ENCODE measurements at regions of chr12 and their contacts with region 1.

Region 1: DNA sequence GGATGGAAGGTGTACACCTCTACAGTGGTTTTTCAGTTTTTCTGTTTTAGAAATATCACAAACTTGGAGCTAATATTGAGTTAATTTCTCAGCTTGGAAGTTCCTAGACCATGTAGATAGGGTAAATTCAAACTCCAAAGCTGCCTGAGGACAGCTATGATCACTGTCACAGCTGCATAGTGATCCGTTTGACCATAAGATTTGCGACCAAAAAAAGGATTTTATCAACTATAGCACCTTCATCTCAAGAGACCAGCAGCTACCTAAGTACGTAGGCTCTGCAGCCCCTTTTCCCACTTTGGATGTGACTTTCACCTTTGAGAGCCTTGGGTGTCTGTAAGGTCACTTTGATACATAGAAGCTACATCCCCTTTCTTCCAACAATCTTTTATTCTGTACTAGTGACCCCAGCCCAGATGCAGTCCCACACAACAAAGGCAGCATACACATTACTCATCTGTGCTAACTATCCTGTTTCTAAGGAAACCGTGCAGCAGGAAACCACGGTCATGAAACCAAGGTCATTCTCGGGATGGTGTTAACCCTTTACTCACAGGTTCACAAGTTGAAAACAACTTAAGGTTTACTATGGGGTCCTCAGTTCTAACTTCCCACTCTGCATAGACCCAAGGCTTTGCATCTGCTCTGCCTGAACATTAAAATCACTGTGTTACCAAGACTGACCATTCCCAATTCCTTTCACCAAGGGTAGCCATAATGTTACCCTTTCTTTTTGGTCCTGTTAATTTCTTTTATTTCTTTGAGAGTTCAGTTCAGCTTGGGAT is 75.4 kb downstream of the IFT81 start:
- DNase-seq: no peak
- ATAC-seq: no peak
- H3K4me3 ChIP-seq: no peak overlapping the region
- H3K27ac ChIP-seq: no peak overlapping the region
- H3K4me1 ChIP-seq: no peaks in the 10 kb centered on the region
- H3K27me3 ChIP-seq: no peaks in the 10 kb centered on the region
- CTCF ChIP-seq: no peak

Region 2: GRCh38 chr12:110039085-110039807 is 160.3 kb before region 1 on chr12:
- CTCF ChIA-PET with region 1: no interaction called
- POLR2A ChIA-PET with region 1: no interaction called
- in situ Hi-C with region 1: no loop called
- intact Hi-C with region 1: no loop called
- DNase-seq: peak; percentile 93
- ATAC-seq: peak; percentile 96
- H3K4me3 ChIP-seq: peak overlapping the region in 1 of 2 experiments; percentile 26; a peak in 2 of 4 replicates
- H3K27ac ChIP-seq: peak overlapping the region; percentile 96
- H3K4me1 ChIP-seq: peaks cover 46% of the 10 kb centered on the region
- H3K27me3 ChIP-seq: no peaks in the 10 kb centered on the region
- CTCF ChIP-seq: no peak

Region 3: DNA sequence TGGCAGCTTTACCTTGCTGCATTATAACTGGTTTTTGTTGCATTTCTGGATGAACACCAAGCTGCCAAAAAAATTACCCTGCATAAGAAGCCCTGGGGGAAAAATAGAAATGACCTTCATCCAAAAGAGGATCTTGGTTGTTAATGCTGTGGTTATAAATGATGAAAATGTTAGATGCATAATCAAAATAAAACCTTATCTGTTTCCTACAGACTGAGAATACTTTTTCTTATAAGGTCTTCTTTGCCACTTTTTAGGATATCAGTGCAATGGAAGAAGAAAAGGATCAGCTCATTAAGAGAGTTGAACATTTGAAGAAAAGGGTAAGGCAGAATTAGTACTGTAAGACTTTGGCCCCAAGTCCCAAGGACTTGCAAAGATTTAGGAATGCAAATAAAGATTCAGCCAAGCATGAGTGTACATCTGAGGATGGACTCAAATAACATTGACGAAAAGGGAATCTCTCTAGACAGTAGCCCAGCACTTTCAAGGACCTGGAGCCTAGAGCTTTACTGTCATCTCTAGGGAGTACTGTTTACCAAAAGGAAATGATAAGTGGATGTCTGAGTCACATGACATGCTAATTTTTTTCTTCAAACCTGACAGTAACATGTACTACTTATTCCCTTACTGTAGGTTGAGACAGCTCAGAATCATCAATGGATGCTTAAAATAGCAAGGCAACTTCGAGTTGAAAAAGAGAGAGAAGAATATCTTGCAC is 64.7 kb before region 1 on chr12:
- CTCF ChIA-PET with region 1: no interaction called
- POLR2A ChIA-PET with region 1: no interaction called
- in situ Hi-C with region 1: no loop called
- intact Hi-C with region 1: no loop called
- DNase-seq: no peak
- ATAC-seq: no peak
- H3K4me3 ChIP-seq: no peak overlapping the region
- H3K27ac ChIP-seq: no peak overlapping the region
- H3K4me1 ChIP-seq: no peaks in the 10 kb centered on the region
- H3K27me3 ChIP-seq: no peaks in the 10 kb centered on the region
- CTCF ChIP-seq: no peak

Region 4: DNA sequence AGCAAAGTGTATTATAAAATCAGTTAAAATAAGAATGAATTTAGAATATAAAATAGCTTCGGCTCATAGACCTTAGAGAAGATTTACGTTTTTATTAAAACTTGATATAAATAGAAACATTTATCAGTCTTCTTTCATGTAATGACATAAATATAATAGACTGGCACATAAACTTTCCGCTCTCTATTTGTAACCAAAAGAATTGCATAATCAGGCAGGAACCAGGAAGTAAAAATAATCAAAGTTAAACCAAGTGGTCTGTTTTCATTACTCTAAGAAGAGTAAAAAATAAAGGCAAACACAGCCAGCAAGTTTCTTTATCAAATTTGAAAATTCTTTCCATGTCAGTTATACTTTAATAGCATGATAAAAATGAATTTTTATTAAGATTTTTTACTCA is 35.2 kb after region 1 on chr12:
- CTCF ChIA-PET with region 1: no interaction called
- POLR2A ChIA-PET with region 1: interaction called, 12 read pairs
- in situ Hi-C with region 1: no loop called
- intact Hi-C with region 1: no loop called
- DNase-seq: no peak
- ATAC-seq: no peak
- H3K4me3 ChIP-seq: no peak overlapping the region
- H3K27ac ChIP-seq: no peak overlapping the region
- H3K4me1 ChIP-seq: no peaks in the 10 kb centered on the region
- H3K27me3 ChIP-seq: no peaks in the 10 kb centered on the region
- CTCF ChIP-seq: no peak